Astrocyte of the cerebellum (primary cell): ENCODE measurements at regions of chr2 and their contacts with region 1.

Region 1: DNA sequence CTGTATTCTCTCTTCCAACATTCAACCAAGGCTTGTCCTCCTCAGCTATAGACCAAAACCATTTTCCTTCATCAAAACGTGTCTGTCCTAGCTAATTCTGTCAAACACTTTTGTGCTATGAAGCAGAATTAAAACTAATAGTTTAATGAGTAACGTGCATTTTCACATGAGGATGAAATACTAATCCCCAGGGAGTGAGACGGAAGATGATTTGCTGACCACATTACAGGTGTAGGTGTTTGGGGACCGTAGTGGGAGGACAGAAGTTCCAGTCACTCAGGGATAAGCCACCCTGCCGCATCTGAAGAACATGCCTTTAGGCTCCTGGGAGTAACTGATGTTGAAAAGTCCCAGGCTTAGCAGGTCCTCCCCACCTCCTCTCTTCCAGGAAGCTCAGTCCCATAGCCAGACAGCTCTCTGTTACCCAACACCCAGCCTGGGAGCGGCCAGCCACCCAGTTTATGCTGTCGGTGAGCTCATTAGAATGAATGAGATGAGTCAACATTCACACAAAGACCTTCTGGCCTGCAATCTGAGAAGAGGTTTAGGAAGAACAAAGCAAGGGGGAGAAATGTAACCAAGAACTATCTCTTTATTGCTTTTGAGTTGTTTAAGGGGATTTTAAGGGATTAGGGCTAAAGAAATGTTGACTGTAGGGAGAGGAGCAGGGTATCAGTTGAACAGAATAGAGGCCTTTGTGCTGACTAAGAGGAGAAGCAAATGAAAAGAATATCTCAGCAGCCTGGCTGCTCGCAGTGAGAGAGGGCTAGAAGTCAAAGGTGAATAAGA is 122.5 kb downstream of the FOXI3 start:
- DNase-seq: no peak
- H3K4me3 ChIP-seq: no peak overlapping the region
- CTCF ChIP-seq: no peak

Region 2: GRCh38 chr2:88416016-88416680 is 86.1 kb after region 1 on chr2:
- in situ Hi-C with region 1: loop called (anchors 5 kb)
- DNase-seq: no peak
- H3K4me3 ChIP-seq: no peak overlapping the region
- CTCF ChIP-seq: no peak